ENCODE measurements at regions of chr7 and their contacts with region 1.

Region 1: DNA sequence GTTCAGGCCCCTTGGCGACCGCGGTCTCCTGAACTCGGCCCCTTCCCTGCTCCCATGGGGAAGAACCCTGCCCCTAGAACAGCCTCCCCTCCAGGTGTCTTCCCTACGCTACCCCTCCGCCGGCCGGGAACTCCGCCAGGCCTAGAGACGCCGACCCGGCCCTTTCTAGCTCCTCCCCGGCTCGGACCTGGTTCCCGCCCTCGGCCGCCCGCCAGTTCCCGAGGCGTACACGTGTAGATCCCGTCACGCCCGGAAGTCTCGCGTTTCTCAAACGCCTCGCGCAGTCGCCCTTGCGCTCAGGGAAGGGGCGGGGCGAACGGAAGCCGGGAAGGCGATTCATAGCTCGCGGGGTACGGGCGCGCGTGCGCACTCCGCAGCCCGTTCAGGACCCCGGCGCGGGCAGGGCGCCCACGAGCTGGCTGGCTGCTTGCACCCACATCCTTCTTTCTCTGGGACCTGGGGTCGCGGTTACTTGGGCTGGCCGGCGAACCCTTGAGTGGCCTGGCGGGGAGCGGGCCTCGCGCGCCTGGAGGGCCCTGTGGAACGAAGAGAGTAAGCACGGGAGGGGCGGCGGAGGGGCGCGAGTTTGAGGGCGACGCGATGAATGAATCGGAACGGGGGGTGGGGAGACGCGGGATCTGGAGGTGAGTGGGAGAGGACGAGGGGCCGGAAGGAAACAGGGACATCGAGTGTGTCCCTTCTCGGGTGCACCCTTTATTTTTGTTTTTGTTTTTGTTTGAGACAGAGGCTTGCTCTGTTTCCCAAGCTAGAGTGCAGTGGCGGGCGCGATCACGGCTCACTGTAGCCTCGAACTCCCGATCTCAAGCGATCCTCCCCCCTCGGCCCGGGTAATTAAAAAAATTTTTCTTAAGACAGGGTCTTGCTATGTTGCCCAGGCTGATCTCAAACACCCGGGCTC is at the start of gene POP7:
- DNase-seq: peak; percentile 98
- H3K4me3 Mint-ChIP-seq: peak within 1 kb of the TSS; percentile 99
- H3K27ac Mint-ChIP-seq: peak within 1 kb of the TSS; percentile 97
- H3K4me1 Mint-ChIP-seq: peaks cover 6% of the 10 kb centered on the region
- H3K27me3 Mint-ChIP-seq: peaks cover 6% of the 10 kb centered on the region
- total RNA-seq, gene POP7: 67.6 and 68.7 TPM in 2 replicates

Region 2: DNA sequence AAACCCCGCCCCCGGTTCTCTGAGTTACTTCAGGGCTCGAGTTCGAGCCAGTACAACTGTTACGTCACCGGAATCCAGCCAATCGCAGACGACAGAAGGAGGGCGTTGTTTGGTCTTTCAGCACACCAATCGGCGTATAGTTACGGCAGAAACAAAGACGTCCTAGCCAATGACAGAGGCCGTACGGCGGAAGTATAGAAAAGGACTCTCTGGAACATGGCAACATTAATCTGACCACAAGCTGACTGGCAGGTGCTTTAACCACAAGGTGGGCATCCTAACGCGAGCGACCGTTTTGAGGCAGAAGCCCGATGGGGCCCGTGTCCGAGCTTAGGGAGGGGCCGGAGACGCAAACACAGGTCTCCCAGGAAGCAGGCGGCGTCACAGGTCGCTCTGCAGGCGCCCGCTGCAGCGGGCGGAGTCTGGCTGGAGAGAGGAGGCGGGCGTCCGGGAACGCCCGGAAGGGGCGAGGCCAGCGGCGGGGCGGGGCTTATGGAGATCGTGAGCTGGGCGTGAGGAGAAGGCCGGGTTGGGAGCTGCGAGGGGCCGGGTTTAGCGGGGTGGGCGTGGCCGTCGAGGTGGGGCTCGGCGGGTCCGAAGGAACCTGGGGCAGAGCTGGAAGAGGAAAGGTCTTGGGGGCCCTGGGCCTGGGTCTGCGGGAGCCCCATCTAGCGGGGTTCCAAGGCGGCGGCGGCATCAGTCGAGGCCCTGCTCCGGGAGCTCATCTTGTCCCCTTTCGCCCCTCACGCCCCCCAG is 93.9 kb before region 1 on chr7 and contains the start of gene MOSPD3:
- intact Hi-C with region 1: loop called (anchors 5 kb)
- DNase-seq: peak; percentile 98
- H3K4me3 Mint-ChIP-seq: peak within 1 kb of the TSS; percentile 97
- H3K27ac Mint-ChIP-seq: peak within 1 kb of the TSS; percentile 99
- H3K4me1 Mint-ChIP-seq: peaks cover 10% of the 10 kb centered on the region
- H3K27me3 Mint-ChIP-seq: no peaks in the 10 kb centered on the region
- total RNA-seq, gene MOSPD3: 14.1 TPM in 2 replicates

Region 3: DNA sequence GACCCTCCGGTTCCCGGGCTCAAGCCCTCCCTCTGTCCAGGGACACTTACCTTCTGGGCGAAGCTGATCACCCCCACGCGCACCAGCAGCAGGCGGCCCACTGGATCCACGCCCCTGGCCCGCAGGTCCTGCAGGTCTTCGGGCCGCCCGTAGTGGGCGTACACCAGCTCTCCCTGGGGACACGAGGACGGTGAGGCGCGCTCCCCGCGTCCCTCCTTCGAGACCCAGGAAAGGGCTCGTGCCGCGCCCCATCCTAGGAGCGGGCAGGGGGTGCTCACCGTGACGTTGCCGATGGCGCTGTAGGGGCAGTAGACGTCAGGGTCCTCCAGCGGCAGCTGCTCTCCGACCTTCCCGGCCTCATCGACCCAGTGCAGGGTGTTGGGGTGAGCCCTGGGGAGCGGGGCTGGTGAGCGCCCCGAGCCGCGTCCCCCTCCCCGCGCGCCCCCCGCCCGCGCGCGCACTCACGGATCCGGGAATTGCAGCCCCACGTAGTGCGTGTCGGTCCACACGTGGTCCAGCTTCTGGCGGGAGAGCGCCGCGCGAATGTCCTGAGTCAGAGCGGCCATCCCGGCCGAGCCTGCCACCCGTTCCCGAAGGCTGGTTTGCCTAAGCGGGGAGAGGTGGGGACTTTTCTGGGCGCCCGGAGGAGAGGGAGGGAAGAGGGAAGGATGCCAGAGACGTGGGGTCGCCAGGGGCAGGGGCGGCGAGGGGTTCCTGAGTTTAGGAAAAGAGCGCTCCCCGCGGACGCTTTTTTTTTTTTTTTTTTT is 72.9 kb before region 1 on chr7:
- intact Hi-C with region 1: loop called (anchors 1 kb)
- DNase-seq: peak; percentile 61
- H3K4me3 Mint-ChIP-seq: peak overlapping the region; percentile 89
- H3K27ac Mint-ChIP-seq: peak overlapping the region; percentile 95
- H3K4me1 Mint-ChIP-seq: peaks cover 28% of the 10 kb centered on the region
- H3K27me3 Mint-ChIP-seq: no peaks in the 10 kb centered on the region

Region 4: GRCh38 chr7:100691676-100692577 is 14.1 kb before region 1 on chr7:
- intact Hi-C with region 1: loop called (anchors 1 kb)
- DNase-seq: peak; percentile 74
- H3K4me3 Mint-ChIP-seq: peak overlapping the region; percentile 90
- H3K27ac Mint-ChIP-seq: peak overlapping the region; percentile 0
- H3K4me1 Mint-ChIP-seq: peaks cover 23% of the 10 kb centered on the region
- H3K27me3 Mint-ChIP-seq: peaks cover 5% of the 10 kb centered on the region

Region 5: GRCh38 chr7:100726996-100727761 is 21.2 kb after region 1 on chr7:
- intact Hi-C with region 1: loop called (anchors 1 kb)
- DNase-seq: no peak
- H3K4me3 Mint-ChIP-seq: no peak overlapping the region
- H3K27ac Mint-ChIP-seq: no peak overlapping the region
- H3K4me1 Mint-ChIP-seq: peaks cover 3% of the 10 kb centered on the region
- H3K27me3 Mint-ChIP-seq: peaks cover 10% of the 10 kb centered on the region

Region 6: DNA sequence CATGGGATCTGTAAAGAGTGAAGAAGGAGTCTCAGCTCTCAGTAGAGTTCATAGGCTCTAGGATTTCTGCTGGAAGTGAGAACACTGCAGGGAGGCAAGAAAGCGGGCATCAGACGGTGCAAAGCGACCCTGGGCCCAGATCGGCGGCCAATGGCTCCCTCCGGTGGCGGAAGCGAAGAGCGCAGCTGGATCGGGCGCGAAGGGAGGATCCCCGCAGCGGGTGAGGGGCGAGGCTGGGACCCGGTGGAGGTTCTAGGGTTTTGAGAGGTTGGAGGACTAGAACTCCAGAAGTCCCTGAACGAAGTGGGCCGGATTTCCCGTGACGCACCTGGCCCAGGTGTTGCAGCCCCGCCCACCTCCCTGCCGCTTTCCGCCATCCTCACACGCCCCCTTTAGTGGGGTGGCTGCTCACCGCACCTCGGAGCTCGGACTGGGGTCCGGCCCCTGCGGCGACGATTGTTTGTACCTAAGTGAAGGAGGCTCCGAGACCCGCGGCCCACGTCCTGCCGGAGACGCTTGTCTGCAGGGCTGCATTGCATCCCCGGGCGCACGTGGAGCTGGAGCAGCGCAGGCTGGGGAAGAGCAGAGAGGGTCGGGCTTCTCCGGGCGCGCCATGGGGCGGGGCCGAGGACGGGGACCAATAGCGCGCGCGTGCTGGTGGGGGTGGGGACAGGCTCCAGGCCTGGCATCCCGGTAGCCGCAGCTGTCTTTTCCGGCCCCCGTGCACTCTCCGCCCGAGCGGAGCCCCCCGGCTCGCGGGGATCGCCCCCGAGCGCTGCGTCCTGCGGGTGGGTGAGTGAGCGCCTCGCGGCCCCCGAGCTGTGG is 146.2 kb after region 1 on chr7 and contains the start of gene SLC12A9:
- intact Hi-C with region 1: loop called (anchors 1 kb)
- DNase-seq: peak; percentile 85
- H3K4me3 Mint-ChIP-seq: peak within 1 kb of the TSS; percentile 93
- H3K27ac Mint-ChIP-seq: peak within 1 kb of the TSS; percentile 61
- H3K4me1 Mint-ChIP-seq: peaks cover 3% of the 10 kb centered on the region
- H3K27me3 Mint-ChIP-seq: no peaks in the 10 kb centered on the region
- total RNA-seq, gene SLC12A9: 27.3 and 31.6 TPM in 2 replicates